Activated T-helper 2 cell treated with anti-CD3 and anti-CD28 coated beads, Interferon-gamma antibody, Interleukin-2, Interleukin-4, amounts not matched to agents 10 μg/mL and 5 μg/mL and 100 μg/mL, durations not matched to agents 14 hours and 24 hours and 36 hours (primary cell): ENCODE measurements at regions of chr10 and their contacts with region 1.

Region 1: GRCh38 chr10:60536529-60537114 is 146.9 kb upstream of the ANK3 start:
- DNase-seq: no peak
- H3K4me3 Mint-ChIP-seq: no peak overlapping the region
- H3K27ac Mint-ChIP-seq: peak overlapping the region; percentile 17
- H3K4me1 Mint-ChIP-seq: peaks cover 37% of the 10 kb centered on the region
- H3K27me3 Mint-ChIP-seq: no peaks in the 10 kb centered on the region

Region 2: DNA sequence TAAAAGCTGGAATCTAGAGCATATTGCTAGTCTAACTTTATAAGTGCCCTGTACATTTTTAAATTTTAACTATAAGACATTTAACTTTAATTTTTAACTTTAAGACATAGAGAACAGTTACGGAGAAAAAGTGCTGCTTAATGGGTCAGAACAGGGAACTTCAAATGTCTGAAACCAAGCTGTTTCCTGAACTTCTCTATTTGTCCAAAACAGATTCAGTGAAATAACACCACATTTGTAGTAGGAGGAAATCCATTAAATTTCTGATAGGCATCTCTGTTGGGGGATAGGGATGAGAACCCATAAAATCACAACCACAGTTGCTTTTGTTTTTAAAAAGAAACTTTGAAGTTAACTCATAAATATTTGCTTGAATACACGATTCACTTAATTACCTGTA is 23.8 kb after region 1 on chr10:
- intact Hi-C with region 1: loop called (anchors 2 kb)
- DNase-seq: no peak
- H3K4me3 Mint-ChIP-seq: no peak overlapping the region
- H3K27ac Mint-ChIP-seq: no peak overlapping the region
- H3K4me1 Mint-ChIP-seq: peaks cover 9% of the 10 kb centered on the region
- H3K27me3 Mint-ChIP-seq: no peaks in the 10 kb centered on the region

Region 3: DNA sequence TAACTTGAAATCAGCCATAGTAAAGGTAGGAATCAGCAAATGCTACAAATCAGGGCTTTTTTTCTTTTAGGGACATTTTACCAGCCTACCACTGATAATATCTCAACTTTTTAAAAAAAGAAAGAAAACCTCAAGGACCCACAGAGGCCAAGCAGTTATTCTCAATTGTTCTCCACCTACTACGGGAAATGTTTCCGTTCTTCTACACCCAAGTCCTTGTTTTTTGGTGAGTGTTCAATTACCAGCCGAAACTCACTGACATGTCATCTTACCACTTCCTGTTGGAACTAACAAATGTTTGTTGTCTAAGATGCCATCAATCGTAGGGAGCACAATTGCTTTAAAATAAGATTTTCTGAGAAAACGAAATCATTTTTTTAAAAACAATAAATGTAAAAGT is 191.4 kb after region 1 on chr10:
- intact Hi-C with region 1: loop called (anchors 5 kb)
- DNase-seq: no peak
- H3K4me3 Mint-ChIP-seq: peak overlapping the region; percentile 28
- H3K27ac Mint-ChIP-seq: peak overlapping the region; percentile 36
- H3K4me1 Mint-ChIP-seq: peaks cover 55% of the 10 kb centered on the region
- H3K27me3 Mint-ChIP-seq: peaks cover 3% of the 10 kb centered on the region